Activated CD8-positive, alpha-beta T cell treated with anti-CD3 and anti-CD28 coated beads for 36 hours (primary cell): ENCODE measurements at regions of chr2 and their contacts with region 1.

Region 1: DNA sequence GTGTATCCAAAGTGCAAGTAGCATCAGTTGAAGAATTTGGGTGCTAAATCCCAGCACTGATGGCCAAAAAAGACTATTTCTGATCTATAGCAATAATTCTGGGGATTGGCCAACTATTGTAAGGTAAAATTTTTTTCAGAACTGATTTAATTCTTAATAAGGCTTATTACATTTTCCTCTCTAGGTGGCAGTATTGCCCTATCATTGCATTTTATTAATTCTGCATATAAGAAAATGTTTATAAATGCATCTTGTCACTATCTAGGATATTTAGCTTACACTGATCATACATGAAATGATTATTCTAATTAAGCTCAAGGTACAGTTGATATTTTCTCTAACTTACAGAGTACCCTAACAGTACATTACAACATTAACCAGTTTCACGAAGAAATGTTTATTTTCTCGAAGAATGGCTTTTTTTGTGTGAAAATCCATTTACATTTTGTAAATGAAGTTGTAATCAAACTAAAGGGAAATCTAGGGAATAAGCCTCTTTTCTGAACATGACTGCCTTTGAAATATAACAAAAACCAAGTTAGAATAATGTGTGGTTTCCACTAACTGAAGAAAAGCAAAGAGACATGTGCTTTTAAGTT is 11.0 kb downstream of the TTN start:
- DNase-seq: no peak
- ATAC-seq: no peak
- H3K4me3 Mint-ChIP-seq: no peak overlapping the region
- H3K27ac Mint-ChIP-seq: no peak overlapping the region
- H3K4me1 Mint-ChIP-seq: no peaks in the 10 kb centered on the region
- H3K27me3 Mint-ChIP-seq: no peaks in the 10 kb centered on the region
- CTCF ChIP-seq: peak; percentile 68

Region 2: GRCh38 chr2:178761759-178762371 is 34.3 kb before region 1 on chr2:
- CTCF ChIA-PET with region 1: interaction called, 10 read pairs
- POLR2A ChIA-PET with region 1: no interaction called
- intact Hi-C with region 1: no loop called
- DNase-seq: peak; percentile 37
- ATAC-seq: peak; percentile 80
- H3K4me3 Mint-ChIP-seq: no peak overlapping the region
- H3K27ac Mint-ChIP-seq: no peak overlapping the region
- H3K4me1 Mint-ChIP-seq: no peaks in the 10 kb centered on the region
- H3K27me3 Mint-ChIP-seq: no peaks in the 10 kb centered on the region
- CTCF ChIP-seq: peak; percentile 84

Region 3: DNA sequence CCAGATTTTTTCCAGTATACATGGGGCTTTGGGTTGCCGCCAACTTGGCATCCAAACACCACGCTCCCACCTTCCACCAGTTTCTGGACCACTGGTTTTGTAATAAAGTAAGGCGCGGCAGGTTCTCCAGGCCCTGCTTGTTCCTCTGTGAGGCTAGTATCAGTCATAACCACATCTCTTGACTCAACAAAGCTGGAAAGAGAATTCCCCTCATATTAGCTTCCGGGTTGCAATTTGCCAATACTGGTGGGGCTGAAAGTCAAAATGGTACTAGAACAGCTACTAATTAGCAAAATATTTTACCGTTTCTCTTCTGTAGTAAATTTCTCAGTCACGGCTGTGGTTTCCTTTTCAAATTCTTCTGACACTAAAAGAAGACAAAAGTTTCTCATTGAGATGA is 13.9 kb before region 1 on chr2:
- CTCF ChIA-PET with region 1: interaction called, 11 read pairs
- POLR2A ChIA-PET with region 1: no interaction called
- intact Hi-C with region 1: no loop called
- DNase-seq: no peak
- ATAC-seq: no peak
- H3K4me3 Mint-ChIP-seq: no peak overlapping the region
- H3K27ac Mint-ChIP-seq: no peak overlapping the region
- H3K4me1 Mint-ChIP-seq: no peaks in the 10 kb centered on the region
- H3K27me3 Mint-ChIP-seq: no peaks in the 10 kb centered on the region
- CTCF ChIP-seq: no peak

Region 4: GRCh38 chr2:178891265-178891958 is 95.2 kb after region 1 on chr2:
- CTCF ChIA-PET with region 1: interaction called, 13 read pairs
- POLR2A ChIA-PET with region 1: no interaction called
- intact Hi-C with region 1: no loop called
- DNase-seq: peak; percentile 83
- ATAC-seq: peak; percentile 98
- H3K4me3 Mint-ChIP-seq: no peak overlapping the region
- H3K27ac Mint-ChIP-seq: no peak overlapping the region
- H3K4me1 Mint-ChIP-seq: peaks cover 3% of the 10 kb centered on the region
- H3K27me3 Mint-ChIP-seq: no peaks in the 10 kb centered on the region
- CTCF ChIP-seq: peak; percentile 95

Region 5: DNA sequence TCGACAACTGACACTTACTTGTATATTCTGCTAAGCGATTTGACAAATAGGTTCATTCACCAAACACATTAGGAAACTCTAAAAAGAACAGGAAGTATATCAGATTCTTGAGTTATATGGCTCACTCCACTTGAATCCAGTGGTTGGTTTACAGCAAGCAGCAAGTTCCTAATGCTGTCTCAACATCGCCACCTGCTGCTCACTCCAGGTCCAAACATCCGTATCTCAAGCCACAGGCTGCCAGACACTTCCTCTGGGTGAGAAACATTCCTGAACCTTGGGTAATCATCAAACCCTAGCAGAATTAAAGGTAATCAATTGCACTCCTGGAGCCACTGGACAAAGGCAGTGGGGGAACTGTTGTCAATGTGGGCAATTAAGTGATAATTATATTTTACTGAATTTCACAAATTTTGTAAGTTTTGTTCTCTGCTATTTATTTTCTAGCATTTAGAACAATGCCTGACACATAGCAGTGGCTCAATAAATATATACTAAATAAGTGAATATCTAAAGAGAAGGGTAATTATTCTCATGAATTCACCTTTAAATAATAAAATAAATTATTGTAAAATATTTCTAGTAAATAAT is 118.2 kb after region 1 on chr2:
- CTCF ChIA-PET with region 1: interaction called, 4 read pairs
- POLR2A ChIA-PET with region 1: no interaction called
- intact Hi-C with region 1: loop called (anchors 5 kb)
- DNase-seq: peak; percentile 89
- ATAC-seq: peak; percentile 92
- H3K4me3 Mint-ChIP-seq: no peak overlapping the region
- H3K27ac Mint-ChIP-seq: no peak overlapping the region
- H3K4me1 Mint-ChIP-seq: peaks cover 7% of the 10 kb centered on the region
- H3K27me3 Mint-ChIP-seq: no peaks in the 10 kb centered on the region
- CTCF ChIP-seq: peak; percentile 89

Region 6: DNA sequence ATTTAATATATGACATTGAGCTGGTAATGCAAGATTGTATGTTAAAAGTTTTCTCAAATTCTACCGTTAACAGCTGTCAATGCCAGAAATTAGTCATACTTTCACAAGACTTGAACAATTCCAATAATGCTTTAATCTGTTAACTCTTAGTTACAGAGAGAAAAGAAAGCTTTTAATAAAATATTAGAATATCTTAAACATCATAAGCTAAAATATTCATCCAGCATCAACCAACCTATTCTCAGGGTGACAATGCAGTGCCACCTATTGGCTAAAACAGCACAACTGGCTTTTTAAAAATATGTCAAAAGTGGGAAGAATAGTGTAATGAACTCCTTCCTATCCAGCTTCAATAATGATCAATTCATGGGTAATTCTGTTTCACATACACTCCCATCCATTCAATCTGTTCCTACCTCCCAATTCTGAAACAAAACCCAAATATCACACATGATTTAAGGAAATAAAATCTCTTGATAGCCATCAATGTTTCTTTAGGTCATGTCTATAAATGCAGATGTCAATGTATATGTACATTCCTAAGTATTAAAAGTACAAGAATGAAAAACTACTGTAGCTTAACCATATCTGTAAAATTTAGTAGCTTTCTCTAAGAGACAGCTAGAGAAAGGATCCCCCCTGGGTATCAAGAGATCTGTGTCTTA is 333.5 kb after region 1 on chr2:
- CTCF ChIA-PET with region 1: interaction called, 14 read pairs
- POLR2A ChIA-PET with region 1: no interaction called
- intact Hi-C with region 1: no loop called
- DNase-seq: peak; percentile 22
- ATAC-seq: no peak
- H3K4me3 Mint-ChIP-seq: no peak overlapping the region
- H3K27ac Mint-ChIP-seq: no peak overlapping the region
- H3K4me1 Mint-ChIP-seq: no peaks in the 10 kb centered on the region
- H3K27me3 Mint-ChIP-seq: no peaks in the 10 kb centered on the region
- CTCF ChIP-seq: peak; percentile 75